ENCODE measurements at regions of chr11 and their contacts with region 1.

Region 1: GRCh38 chr11:114942207-114942606 is 263.9 kb downstream of the NXPE2 start:
- DNase-seq: no peak
- ATAC-seq: no peak

Region 2: DNA sequence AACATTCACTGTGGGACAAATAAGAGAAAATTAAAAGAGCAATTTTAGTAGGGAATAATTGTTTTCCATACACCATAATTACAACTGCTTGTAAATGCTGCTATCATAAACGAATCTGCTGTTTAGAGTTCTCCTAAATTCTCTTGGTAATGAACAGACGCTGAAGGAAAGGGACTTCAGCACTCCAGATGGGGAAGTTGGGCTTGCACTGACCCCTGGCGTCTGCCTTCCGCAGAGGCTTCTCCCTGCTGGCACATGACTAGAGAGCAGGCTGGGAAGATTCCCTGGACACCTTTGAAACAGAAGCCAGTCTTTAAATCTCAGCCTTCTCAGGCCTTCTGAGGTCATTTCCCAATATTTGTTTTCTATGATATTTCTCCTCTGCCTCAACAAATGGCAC is 179.8 kb before region 1 on chr11:
- intact Hi-C with region 1: no loop called
- DNase-seq: peak; percentile 77
- ATAC-seq: peak; percentile 92

Region 3: GRCh38 chr11:114774599-114775361 is 167.4 kb before region 1 on chr11:
- intact Hi-C with region 1: loop called (anchors 10 kb)
- DNase-seq: no peak
- ATAC-seq: peak; percentile 88

Region 4: DNA sequence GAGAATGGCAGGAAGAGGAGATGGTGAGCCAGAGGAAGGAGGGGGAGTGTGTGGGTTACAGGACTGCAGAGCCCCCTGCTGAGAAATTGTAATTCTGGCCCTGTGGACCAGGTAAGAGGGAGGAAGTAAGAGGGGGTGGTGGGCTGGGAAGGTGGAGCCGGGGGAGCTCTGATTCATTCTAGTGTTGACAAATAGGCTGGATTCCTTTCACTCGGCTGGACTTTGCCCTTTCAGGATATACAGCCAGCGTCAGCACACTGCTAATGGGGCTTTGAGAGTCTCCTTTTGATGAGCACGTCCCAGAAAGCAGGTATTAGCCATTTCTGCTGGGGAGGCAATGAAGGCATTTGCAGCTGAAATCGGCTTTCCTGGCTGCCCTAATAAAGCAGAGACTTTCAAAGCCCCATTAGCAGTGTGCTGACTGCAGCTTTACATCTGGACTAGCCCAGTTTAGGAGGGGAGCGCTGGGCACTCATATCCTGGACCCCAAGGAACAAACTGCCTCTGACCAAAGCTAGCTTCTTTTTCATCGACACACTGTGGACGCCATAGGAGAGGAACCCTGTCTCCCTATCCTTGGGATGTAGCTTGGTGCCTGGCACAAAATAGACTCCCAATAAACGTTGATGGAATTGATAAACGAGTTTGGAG is 606.8 kb after region 1 on chr11:
- intact Hi-C with region 1: no loop called
- DNase-seq: no peak
- ATAC-seq: no peak

Measured in Right ventricle myocardium superior (tissue), 1 donor.